CD4-positive, alpha-beta T cell (primary cell): ENCODE measurements at regions of chr16 and their contacts with region 1.

Region 1: DNA sequence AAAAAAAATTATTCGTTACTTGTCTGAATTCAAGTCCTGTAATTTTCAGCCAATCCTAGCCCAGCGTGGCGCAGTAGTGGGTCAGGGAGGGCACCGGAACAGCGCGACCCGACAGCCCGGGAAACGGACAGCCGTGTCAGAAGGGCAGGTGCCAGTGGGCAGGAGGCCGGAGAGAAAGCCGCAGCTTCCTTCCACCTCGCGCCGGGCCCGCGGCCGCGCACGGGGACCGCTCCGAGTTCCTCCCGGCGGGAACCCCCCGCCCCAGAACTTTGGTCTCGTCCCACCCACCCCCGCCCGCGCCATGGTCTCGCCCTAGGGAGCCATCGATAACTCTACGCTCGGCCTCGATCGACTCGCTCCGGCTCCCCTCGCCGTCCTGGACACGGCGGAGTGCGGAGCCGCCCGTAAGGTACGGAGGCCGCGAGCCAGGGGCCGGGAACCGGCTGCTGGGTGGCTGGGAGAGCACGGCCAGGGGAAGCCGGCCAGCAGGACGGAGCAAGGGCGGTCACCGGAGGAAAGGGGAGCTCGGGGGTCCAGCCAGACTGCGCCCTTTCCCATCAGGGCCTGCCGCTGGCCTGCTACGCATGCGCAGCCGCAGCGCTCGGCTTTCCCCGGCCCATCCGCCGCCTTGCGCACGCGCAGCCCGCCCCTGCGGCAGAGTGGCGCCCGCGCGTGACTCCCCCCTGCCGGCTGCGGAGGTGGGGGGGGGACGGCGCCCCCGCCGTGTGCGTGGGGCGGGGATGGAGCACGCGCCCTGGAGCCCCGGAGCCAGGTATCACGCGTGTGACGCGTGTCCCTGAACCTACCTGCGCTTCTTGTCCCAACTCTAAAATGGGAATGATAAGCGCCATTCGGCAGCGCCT is at the start of gene MLST8:
- DNase-seq: peak; percentile 82 to 98 (median 92)
- ATAC-seq: peak; percentile 82
- H3K4me3 ChIP-seq: peak within 1 kb of the TSS; percentile 59
- H3K4me3 Mint-ChIP-seq: peak within 1 kb of the TSS; percentile 90
- H3K27ac ChIP-seq: peak within 1 kb of the TSS; percentile 90 to 94
- H3K27ac Mint-ChIP-seq: peak within 1 kb of the TSS; percentile 79
- H3K4me1 ChIP-seq: peaks cover 23% of the 10 kb centered on the region
- H3K4me1 Mint-ChIP-seq: peaks cover 13% of the 10 kb centered on the region
- H3K27me3 ChIP-seq: no peaks in the 10 kb centered on the region
- H3K27me3 Mint-ChIP-seq: no peaks in the 10 kb centered on the region
- CTCF ChIP-seq: peak; percentile 26
- total RNA-seq, gene MLST8: 22.9 to 26.4 TPM

Region 2: GRCh38 chr16:1899641-1900451 is 305.5 kb before region 1 on chr16:
- CTCF ChIA-PET with region 1: no interaction called
- POLR2A ChIA-PET with region 1: no interaction called
- intact Hi-C with region 1: no loop called
- DNase-seq: no peak
- ATAC-seq: no peak
- H3K4me3 ChIP-seq: no peak overlapping the region
- H3K4me3 Mint-ChIP-seq: no peak overlapping the region
- H3K27ac ChIP-seq: no peak overlapping the region
- H3K27ac Mint-ChIP-seq: no peak overlapping the region
- H3K4me1 ChIP-seq: no peaks in the 10 kb centered on the region
- H3K4me1 Mint-ChIP-seq: no peaks in the 10 kb centered on the region
- H3K27me3 ChIP-seq: peaks cover 2 to 4% of the 10 kb centered on the region in 2 experiments
- H3K27me3 Mint-ChIP-seq: peaks cover 4% of the 10 kb centered on the region
- CTCF ChIP-seq: no peak

Region 3: GRCh38 chr16:2063861-2064260 is 141.5 kb before region 1 on chr16:
- CTCF ChIA-PET with region 1: no interaction called
- POLR2A ChIA-PET with region 1: no interaction called
- intact Hi-C with region 1: no loop called
- DNase-seq: no peak
- ATAC-seq: no peak
- H3K4me3 ChIP-seq: no peak overlapping the region
- H3K4me3 Mint-ChIP-seq: no peak overlapping the region
- H3K27ac ChIP-seq: no peak overlapping the region
- H3K27ac Mint-ChIP-seq: no peak overlapping the region
- H3K4me1 ChIP-seq: no peaks in the 10 kb centered on the region
- H3K4me1 Mint-ChIP-seq: no peaks in the 10 kb centered on the region
- H3K27me3 ChIP-seq: no peaks in the 10 kb centered on the region
- H3K27me3 Mint-ChIP-seq: no peaks in the 10 kb centered on the region
- CTCF ChIP-seq: no peak

Region 4: DNA sequence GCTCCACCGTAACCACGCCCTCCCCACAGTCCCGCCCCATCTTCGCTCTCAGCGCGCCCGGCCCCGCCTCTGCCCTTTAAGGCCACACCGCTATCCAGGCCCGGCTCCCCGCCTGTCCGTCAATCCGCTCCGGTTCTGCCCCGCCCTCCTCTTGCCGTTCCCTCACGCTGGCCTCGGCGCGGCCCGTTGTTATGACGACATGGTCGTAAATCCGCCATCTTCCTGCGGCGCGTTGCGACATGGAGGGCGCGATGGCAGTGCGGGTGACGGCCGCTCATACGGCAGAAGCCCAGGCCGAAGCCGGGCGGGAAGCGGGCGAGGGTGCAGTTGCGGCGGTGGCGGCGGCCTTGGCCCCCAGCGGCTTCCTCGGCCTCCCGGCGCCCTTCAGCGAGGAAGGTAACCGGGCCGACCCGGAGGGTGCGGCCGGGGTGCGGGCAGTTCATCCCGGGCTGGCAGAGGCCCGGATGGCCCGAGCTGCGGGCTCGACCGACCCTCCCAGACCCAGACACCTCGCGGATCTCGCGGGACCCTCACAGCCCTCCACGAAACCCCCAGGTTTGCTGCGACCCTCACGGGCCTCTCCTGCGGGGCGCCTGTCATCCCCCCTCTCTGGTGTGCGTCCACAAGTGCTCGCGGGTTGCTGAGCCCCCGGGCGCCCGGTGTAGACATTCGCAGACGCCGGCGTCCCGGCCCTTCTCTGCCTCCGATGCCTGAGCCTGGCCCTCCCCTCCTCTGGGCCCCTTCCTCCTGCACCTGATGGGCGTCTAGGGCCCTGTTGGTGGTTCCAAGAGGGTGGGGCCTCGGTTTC is 18.2 kb after region 1 on chr16 and contains the start of gene E4F1:
- CTCF ChIA-PET with region 1: no interaction called
- POLR2A ChIA-PET with region 1: interaction called, 5 read pairs
- intact Hi-C with region 1: loop called (anchors 1 kb)
- DNase-seq: peak; percentile 97 to 100 (median 99)
- ATAC-seq: peak; percentile 95
- H3K4me3 ChIP-seq: peak within 1 kb of the TSS; percentile 80
- H3K4me3 Mint-ChIP-seq: peak within 1 kb of the TSS; percentile 89
- H3K27ac ChIP-seq: peak within 1 kb of the TSS; percentile 42 to 55
- H3K27ac Mint-ChIP-seq: peak within 1 kb of the TSS; percentile 62
- H3K4me1 ChIP-seq: peaks cover 30% of the 10 kb centered on the region
- H3K4me1 Mint-ChIP-seq: peaks cover 15% of the 10 kb centered on the region
- H3K27me3 ChIP-seq: no peaks in the 10 kb centered on the region
- H3K27me3 Mint-ChIP-seq: no peaks in the 10 kb centered on the region
- CTCF ChIP-seq: no peak
- total RNA-seq, gene E4F1: 31.8 to 33.8 TPM

Region 5: DNA sequence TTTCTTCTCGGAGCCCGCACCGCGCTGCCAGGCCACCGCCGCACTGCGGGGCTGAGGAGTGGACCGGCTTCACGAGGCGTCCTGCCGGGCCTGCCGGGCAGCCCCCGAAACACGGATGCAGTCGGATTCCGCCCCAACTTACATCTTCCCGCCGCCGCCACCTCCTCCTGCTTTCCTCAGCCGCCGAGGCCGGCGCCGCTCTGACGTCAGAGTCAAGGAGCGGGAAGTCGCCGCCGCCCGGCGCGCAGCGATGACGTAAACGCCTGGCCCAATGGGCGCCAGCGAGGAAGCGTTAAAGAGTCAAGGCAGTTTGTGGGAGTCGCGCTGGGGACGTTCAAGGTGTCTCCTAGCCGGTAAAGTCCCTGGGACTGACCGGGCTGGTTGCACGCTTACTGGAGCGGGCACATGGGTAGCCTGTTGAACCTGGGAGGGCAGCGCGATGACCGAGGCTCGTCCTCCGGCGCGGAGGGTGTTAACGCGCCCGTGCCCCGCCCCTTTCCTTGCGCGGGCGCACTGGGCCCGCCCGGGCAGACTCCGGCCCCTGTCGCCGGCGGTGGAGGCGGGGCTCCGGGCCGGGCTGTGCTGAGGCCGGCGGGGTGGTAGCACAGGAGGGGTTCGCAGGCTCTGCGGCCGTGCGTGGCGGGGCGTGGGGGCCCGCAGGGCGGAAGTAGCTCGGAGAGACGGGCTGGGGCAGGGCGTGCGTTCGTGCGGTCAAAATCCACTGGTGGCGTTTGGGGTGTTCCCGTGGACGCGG is 62.8 kb after region 1 on chr16 and contains the start of gene RNPS1:
- CTCF ChIA-PET with region 1: no interaction called
- POLR2A ChIA-PET with region 1: interaction called, 7 read pairs
- intact Hi-C with region 1: loop called in 1 of 2 experiments (anchors 1 kb)
- DNase-seq: peak; percentile 87 to 98 (median 96)
- ATAC-seq: peak; percentile 76
- H3K4me3 ChIP-seq: peak within 1 kb of the TSS; percentile 85
- H3K4me3 Mint-ChIP-seq: peak within 1 kb of the TSS; percentile 99
- H3K27ac ChIP-seq: peak within 1 kb of the TSS; percentile 92 to 99
- H3K27ac Mint-ChIP-seq: peak within 1 kb of the TSS; percentile 100
- H3K4me1 ChIP-seq: peaks cover 35% of the 10 kb centered on the region
- H3K4me1 Mint-ChIP-seq: peaks cover 41% of the 10 kb centered on the region
- H3K27me3 ChIP-seq: no peaks in the 10 kb centered on the region
- H3K27me3 Mint-ChIP-seq: no peaks in the 10 kb centered on the region
- CTCF ChIP-seq: no peak
- total RNA-seq, gene RNPS1: 211 to 214 TPM